GM10248 (cell line): ENCODE measurements at regions of chr11 and their contacts with region 1.

Region 1: GRCh38 chr11:122404571-122404970 is 251.0 kb upstream of the UBASH3B start:
- DNase-seq: no peak
- CTCF ChIP-seq: no peak

Region 2: GRCh38 chr11:122393209-122393860 is 11.2 kb before region 1 on chr11:
- CTCF ChIA-PET with region 1: interaction called, 14 read pairs
- POLR2A ChIA-PET with region 1: no interaction called
- DNase-seq: no peak
- CTCF ChIP-seq: no peak

Region 3: DNA sequence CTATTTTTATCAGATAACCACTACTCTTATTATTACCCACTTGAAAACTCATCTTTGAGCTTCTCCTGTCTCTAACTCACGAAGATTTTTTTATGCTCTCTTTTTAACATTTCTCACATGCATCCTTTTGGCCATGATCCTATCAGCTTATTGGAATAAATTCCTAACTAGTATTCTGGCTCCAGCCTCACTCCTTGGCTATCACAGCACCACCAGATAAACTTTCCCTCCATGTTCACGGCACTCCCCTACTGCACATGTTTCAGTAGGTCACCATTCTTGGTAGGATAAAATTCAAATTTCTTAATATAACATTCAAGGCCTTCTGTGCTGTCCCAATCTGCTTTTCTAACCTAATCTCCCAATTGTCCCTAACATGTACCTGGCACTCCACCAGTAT is 64.4 kb after region 1 on chr11:
- CTCF ChIA-PET with region 1: no interaction called
- POLR2A ChIA-PET with region 1: no interaction called
- DNase-seq: no peak
- CTCF ChIP-seq: no peak